ENCODE measurements at regions of chr19 and their contacts with region 1.

Region 1: DNA sequence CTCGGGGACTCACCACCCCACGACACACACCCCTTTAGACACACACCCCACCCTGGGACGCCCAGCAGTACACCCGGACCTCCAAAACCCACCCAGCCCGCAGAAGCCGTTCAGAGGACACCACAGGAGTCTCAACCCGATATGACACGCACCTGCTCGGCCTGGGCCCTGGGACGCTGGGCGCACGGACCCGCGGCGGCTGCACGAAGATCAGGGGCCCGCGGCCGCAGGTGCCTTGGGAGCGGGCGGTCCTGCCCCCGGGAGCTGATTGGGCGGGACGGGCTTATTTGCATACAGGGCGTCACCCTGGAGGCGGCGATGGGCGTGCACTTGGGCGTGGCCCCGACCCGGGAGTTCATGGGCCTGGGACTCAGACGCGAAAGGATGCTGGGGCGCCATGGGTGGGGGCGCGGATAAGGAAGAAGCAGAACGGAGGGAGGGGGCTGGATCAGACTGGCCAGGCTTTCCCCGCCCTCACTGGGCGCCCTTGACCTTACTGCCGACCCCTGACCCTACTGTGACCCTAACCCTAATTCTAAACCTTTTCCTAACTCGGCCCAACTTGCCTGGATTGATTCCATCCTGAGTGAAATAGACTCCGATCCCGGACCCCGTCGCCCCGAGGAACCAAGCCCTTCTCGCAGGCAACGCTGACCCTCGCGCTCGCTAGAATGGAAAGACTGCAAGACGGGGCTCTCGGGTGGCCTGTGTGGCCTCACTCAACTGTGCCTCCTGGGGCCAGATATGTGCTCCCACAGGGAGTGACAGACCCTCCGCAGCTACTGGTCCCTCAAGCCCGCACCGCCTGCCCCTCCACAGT is at the start of gene MEF2B:
- DNase-seq: peak; percentile 72
- H3K4me3 Mint-ChIP-seq: peak within 1 kb of the TSS; percentile 47
- H3K27ac Mint-ChIP-seq: no peak within 1 kb of the TSS
- H3K4me1 Mint-ChIP-seq: peaks cover 16% of the 10 kb centered on the region
- H3K27me3 Mint-ChIP-seq: peaks cover 3% of the 10 kb centered on the region
- total RNA-seq, gene MEF2B: 1.7 and 2.2 TPM in 2 replicates

Region 2: DNA sequence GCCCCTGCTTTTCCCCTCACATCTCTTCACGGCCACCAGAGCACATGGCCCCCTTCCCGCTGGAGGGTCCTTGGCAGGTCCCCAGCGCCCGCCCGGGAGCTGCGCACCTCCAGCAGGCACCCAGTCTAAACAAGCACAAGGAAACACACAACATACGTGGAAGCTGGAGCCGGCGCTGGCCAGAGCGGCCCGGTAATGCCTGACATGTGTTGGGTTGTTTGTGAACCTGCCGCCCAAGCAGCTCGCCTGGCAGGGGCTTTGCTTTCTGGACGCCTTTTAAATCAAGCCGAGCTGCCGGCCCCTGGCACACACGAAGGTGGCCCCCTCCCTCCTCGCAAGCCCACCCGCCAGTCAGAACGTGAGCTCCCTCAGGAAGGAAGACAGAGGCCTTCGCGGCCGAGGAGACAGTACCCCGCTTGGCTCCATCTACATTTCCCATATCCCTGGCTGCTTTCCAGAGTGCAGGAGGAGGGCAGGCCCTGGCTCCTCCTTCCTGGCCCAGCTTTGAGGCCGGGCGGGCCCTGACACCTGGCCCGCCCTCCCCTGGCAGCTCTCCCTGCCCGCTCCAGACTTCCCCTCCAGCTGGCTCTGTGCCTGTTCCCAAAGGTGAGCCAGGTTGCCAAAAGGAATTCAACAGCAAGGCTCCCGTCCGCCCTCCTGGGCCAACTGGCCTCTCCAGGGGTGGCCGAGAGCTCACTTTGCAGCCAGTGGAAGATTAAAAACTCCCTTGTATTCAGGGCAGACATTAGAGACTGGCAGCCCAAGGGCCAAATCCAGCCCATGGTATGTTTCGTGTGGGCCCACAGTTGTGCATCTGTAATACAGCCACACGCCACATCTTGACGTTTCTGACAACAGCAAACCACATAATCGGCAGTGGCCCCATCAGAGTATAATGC is 407.9 kb before region 1 on chr19:
- intact Hi-C with region 1: no loop called
- DNase-seq: no peak
- H3K4me3 Mint-ChIP-seq: no peak overlapping the region
- H3K27ac Mint-ChIP-seq: no peak overlapping the region
- H3K4me1 Mint-ChIP-seq: no peaks in the 10 kb centered on the region
- H3K27me3 Mint-ChIP-seq: no peaks in the 10 kb centered on the region

Region 3: DNA sequence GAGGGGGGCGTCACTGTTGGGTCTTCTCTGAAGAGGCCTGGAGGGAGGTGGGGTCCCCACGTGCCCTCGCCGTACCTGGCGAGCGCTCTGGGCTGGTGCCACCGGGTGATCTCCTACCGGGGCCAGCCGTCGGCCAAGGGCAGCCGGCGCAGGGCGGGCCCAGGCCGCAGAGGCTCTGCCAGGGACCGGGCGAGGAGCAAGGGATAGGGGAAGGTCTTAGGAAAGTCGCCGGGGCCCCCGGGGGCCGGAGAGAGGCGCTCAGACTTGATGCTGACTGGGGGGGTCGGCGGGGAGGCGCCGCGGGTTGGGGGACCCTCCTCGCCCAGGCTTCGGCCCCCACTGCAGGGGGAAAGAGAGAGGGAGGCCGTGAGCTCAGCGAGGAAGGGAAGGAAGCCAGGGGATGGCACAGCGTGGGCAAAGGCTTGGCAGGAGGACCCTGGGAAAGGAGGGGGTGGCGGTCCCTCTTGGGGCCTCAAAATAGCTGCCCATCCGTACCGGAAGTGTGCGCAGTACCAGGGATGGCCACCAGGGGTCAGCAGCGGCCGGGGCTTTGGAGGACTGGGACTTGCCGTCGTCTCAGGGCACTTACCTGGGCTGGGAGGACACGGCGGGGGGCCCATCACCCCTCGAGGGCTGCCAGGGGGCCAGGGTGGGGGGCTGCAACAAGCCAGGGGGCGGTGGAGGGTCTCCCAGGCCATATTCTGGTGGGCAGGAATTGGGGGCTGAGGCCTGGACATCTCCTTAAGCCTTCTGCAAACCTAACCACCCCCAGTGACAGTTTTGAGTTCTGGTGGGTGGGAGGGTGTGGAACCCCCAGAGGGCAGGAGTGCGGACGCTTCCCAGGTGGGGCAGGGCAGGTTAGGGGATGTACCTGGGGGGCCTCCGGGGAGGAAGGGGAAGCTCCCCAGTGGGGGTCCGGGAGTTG is 24.3 kb before region 1 on chr19:
- intact Hi-C with region 1: loop called (anchors 1 kb)
- DNase-seq: peak; percentile 80
- H3K4me3 Mint-ChIP-seq: no peak overlapping the region
- H3K27ac Mint-ChIP-seq: no peak overlapping the region
- H3K4me1 Mint-ChIP-seq: no peaks in the 10 kb centered on the region
- H3K27me3 Mint-ChIP-seq: no peaks in the 10 kb centered on the region

Region 4: GRCh38 chr19:19203012-19203856 is 33.0 kb after region 1 on chr19 and contains the start of gene NR2C2AP:
- intact Hi-C with region 1: loop called (anchors 1 kb)
- DNase-seq: peak; percentile 90
- H3K4me3 Mint-ChIP-seq: peak within 1 kb of the TSS; percentile 95
- H3K27ac Mint-ChIP-seq: peak within 1 kb of the TSS; percentile 89
- H3K4me1 Mint-ChIP-seq: peaks cover 20% of the 10 kb centered on the region
- H3K27me3 Mint-ChIP-seq: peaks cover 2% of the 10 kb centered on the region
- total RNA-seq, gene NR2C2AP: 50.9 and 52.0 TPM in 2 replicates